ENCODE measurements at regions of chr16 and their contacts with region 1.

Region 1: GRCh38 chr16:87581833-87582203 is 20.5 kb upstream of the JPH3 start:
- DNase-seq: peak; percentile 78
- H3K4me3 ChIP-seq: no peak overlapping the region
- H3K27me3 ChIP-seq: peaks cover 3% of the 10 kb centered on the region
- CTCF ChIP-seq: no peak

Region 2: DNA sequence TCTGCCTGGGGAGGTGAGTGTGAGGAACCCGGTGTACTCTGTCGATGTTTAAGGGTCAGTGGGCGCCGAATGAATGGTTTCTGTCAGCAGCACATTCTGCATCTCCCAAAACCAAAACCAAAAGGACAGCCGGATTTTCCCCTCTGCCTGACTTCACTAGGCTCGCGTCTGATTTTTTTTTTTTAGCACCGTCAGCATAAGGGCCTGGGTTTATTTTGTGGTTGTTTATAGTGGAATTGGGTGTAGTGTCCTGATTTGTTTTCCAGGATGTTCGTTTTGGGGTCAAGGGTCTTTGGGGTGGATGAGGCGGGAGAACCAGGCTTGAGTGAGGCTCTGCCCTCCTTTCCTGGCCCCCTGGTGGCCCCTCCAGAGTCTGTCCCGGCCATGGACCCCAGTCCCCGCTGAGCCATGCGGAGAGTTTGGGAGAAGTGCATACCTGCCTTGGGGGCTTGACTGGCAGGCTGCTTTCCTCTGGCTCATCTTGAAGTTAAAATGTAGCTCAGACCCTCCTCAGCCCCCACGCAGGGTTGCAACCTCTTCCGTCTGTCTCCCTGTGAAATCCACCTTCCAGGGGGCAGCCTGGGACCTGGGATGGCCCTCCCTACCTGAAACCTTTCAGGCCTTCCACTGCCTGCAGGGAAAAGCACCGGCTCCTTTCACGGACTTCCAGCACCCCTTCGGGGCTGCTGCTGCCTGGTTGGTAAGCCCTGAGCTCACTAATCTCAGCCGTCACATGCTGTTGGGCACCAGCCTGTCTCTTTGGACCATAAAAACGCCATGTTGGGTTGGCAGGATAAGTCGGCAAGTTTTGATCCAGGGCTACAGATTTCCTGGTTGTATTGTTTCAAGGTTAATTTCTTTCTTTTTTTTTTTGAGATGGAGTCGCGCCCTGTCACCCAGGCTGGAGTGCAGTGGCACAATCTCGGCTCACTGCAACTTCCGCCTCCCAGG is 80.7 kb after region 1 on chr16:
- CTCF ChIA-PET with region 1: no interaction called
- POLR2A ChIA-PET with region 1: no interaction called
- DNase-seq: no peak
- H3K4me3 ChIP-seq: no peak overlapping the region
- H3K27me3 ChIP-seq: peaks cover 5% of the 10 kb centered on the region
- CTCF ChIP-seq: no peak

Region 3: GRCh38 chr16:87765776-87766484 is 184.1 kb after region 1 on chr16 and contains the start of gene KLHDC4:
- CTCF ChIA-PET with region 1: interaction called, 55 read pairs
- POLR2A ChIA-PET with region 1: no interaction called
- DNase-seq: peak; percentile 31
- H3K4me3 ChIP-seq: peak within 1 kb of the TSS; percentile 95
- H3K27me3 ChIP-seq: no peaks in the 10 kb centered on the region
- CTCF ChIP-seq: no peak
- polyA plus RNA-seq, gene KLHDC4: 12.3 and 16.1 TPM in 2 replicates

Region 4: GRCh38 chr16:87784812-87785211 is 203.0 kb after region 1 on chr16:
- CTCF ChIA-PET with region 1: no interaction called
- POLR2A ChIA-PET with region 1: interaction called, 11 read pairs
- DNase-seq: no peak
- H3K4me3 ChIP-seq: no peak overlapping the region
- H3K27me3 ChIP-seq: no peaks in the 10 kb centered on the region
- CTCF ChIP-seq: no peak

Measured in BJ (cell line).